Head of caudate nucleus (tissue), 42 donors: ENCODE measurements at regions of chr6 and their contacts with region 1.

Region 1: GRCh38 chr6:166106076-166106686 is 61.5 kb downstream of the TBXT start:
- DNase-seq: peak; percentile 56 to 94 (median 86)

Region 2: GRCh38 chr6:165884813-165885765 is 221.1 kb before region 1 on chr6:
- intact Hi-C with region 1: loop called (anchors 5 kb)
- DNase-seq: peak; percentile 74 to 93 (median 84)

Region 3: DNA sequence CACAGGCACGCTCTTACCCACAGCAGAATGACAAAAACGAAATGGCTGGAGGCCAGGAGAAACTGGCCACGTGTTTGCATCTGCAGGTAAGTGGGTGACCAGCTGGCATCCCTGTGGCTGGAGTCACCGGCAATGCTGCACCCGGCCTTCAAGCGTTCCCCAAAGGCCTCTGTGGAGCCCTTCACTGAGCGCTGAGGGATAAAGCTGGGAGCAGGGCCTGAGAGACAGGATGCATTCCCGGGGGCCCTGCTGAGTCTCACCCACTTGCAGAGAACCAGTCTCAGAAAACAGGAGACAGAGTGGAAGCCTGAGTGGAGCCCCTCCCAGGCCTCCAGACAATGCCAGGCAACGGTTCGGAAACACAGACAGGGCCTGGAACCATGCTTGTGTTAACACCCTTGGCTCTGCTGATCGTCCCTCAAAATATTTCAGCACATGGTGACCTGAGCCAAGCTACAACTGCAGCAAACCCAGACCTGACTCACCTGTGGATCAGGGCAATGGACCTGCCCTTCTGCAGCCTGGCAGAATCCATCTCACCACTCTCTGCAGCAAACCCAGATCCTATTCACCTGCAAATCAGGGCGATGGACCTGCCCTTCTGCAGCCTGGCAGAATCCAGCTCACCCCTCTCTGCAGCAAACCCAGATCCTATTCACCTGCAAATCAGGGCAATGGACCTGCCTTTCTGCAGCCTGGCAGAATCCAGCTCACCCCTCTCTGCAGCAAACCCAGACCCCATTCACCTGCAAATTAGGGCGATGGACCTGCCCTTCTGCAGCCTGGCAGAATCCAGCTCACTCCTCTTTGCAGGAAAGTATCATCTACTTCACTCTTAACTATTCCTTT is 21.7 kb after region 1 on chr6:
- intact Hi-C with region 1: no loop called
- DNase-seq: no peak

Region 4: DNA sequence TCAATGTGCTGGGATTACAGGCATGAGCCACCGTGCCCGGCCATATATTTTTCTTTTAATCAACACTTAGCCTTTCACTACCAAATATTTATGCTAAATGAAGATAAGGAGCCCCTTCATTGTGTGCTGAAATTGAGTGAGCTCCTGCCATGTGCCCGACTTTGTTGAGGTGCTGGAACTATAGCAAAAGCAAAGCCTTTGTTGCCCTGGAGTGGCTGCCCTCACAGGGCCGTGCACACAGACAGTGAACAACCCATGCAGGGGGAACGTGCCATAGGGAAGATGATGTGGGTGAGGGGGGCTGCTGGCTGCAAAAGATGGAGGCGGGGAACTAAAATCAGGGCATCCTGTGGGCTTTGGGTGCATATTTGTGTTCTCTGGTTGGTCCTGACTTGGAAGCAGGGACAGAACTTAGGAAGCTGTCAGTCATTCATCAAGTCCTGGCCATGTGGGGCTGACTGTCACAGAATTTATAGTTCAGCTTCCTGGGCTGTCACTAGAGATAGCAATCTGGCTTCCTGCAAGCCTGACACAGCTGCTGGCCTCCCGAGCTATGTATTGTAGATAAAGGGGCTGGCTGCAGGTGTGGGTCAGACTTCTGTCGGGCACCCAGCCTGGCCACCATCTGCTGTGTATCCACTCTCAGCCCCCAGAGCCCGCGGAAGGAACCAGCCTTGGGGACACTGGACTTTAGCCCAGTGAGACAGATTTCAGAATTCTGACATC is 333.3 kb after region 1 on chr6:
- intact Hi-C with region 1: no loop called
- DNase-seq: no peak

Region 5: DNA sequence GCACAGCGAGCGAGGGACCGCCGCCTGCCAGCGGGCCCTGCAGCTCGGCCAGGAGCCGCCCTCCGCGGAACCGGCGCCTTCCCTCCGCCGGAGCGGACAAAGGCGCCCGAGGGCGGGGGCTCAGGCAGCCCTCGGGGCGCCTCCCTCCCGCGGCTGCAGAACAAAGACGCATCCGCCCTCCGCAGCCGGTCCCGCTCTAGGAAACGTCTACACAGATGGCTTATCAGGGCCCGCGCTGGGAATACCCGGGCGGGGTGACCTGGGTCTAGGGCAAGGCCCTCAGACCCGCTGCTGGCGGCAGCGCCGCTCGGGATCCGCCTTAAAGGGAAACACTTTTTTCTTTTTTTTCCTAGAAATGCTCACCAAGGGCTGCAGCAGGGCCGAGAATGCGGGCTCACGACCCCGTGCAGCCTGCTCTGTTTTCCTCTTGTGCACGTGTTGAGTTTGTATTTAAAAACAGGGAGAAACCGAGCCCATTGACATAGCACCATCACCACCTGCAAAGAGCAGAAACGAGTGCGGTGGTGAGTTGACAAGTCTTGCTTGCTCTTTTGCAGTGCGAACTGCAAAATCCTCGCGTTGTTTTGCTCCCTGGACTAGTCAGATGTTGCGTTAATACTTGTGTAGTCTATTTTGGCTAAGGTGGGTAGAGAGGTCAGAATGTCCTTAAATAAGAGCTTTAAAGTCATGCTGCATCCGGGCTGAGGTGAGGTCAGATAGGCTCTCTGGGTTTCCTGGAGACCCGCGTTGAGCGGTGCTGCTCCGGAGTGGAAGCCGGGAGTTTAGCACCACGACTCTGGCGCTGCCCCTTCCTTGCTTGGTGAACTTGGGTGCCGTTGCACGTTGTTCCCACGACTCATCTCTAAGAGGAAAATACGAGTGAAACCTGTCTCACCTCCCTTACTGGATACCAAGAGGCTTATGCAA is 522.0 kb after region 1 on chr6:
- intact Hi-C with region 1: no loop called
- DNase-seq: peak; percentile 28 to 86 (median 70)